ENCODE measurements at regions of chr12 and their contacts with region 1.

Region 1: DNA sequence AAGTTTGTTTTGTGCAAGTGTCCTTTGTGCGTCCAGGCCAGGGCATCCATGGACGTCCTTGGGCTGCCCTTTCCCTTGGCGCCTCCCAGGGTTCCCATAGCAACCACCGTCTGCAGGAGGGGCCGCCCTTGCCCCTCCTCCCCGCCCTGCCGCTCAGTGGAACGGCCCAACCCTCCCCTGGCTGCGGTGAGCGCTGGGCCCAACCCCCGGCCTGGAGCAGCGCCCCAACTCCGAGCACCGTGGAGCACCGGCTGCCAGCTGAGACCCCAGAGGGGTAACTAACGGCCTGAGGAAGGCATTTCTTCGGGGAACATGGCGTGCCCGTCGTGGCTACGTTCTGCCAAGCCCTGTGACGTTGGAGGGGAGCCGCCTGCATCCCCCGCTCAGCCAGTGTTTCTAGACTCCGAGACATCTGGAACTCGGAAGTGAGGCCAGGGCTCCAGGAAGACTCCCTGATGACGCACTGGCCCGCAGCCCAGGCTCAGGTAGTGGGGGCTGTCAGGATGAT is 5.3 kb upstream of the ACACB start:
- DNase-seq: peak; percentile 96 to 98 (median 97)
- ATAC-seq: peak; percentile 97
- H3K4me3 ChIP-seq: peak overlapping the region; percentile 16
- H3K27ac ChIP-seq: peak overlapping the region; percentile 61
- H3K4me1 ChIP-seq: peaks cover 15% of the 10 kb centered on the region
- H3K27me3 ChIP-seq: no peaks in the 10 kb centered on the region

Region 2: DNA sequence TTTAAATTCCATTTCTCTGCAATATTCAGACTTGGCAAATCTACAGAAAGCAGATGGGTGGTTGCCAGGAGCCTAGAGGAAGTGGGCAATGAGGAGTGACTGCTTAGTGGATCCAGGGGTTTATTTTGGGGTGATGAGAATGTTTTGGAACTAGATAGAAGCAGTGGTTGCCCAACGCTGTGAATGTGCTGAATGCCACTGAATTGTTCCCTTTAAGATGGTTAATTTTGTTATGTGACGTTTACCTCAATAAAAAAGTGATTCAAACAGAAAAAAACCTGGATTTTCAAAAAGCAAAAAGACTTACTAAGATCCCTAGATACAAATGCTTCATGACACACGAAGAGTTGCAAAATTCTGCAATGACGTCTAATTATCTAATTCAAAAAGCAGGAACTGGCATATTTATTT is 196.9 kb before region 1 on chr12:
- intact Hi-C with region 1: no loop called
- DNase-seq: no peak
- ATAC-seq: no peak
- H3K4me3 ChIP-seq: no peak overlapping the region
- H3K27ac ChIP-seq: no peak overlapping the region
- H3K4me1 ChIP-seq: no peaks in the 10 kb centered on the region
- H3K27me3 ChIP-seq: no peaks in the 10 kb centered on the region

Region 3: GRCh38 chr12:109154451-109155438 is 43.7 kb after region 1 on chr12:
- intact Hi-C with region 1: loop called in 2 of 4 experiments (anchors 5 kb)
- DNase-seq: peak; percentile 89 to 96 (median 95)
- ATAC-seq: peak; percentile 97 to 98
- H3K4me3 ChIP-seq: peak overlapping the region; percentile 79
- H3K27ac ChIP-seq: peak overlapping the region; percentile 87
- H3K4me1 ChIP-seq: peaks cover 14% of the 10 kb centered on the region
- H3K27me3 ChIP-seq: no peaks in the 10 kb centered on the region